Left colon (tissue), 2 donors: ENCODE measurements at regions of chr4 and their contacts with region 1.

Region 1: DNA sequence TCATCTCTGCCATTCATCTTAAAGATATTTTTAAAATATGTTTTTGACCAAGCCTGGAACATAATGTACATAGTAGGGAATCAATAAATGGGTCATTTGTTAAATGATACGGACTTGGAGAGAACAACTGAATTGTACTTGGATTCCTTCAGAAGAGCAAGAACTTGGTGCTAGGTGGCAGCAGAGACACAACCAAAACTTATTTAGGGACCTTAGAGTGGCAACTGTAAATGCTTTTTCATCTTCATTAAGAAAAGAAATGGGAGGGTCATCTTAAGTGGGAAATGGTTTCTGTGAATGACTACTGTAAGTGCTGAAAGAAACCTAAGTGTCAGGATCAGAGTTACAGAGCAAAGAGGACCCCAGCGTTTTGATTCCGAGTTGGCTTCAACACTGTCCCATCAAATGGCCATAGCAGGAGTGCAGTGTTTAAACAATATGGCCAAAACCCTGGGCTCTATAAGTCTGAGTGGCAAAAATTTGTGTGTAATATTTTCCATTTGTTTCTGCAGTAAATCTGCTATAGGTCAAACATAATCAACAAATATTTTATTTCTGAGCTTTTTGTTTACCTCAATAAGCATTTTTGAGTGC is 213.6 kb downstream of the PALLD start:
- DNase-seq: peak in 1 of 2 donors; percentile 28
- ATAC-seq: peak; percentile 51

Region 2: GRCh38 chr4:168309781-168310180 is 400.7 kb before region 1 on chr4:
- intact Hi-C with region 1: no loop called
- DNase-seq: no peak
- ATAC-seq: peak; percentile 69

Region 3: DNA sequence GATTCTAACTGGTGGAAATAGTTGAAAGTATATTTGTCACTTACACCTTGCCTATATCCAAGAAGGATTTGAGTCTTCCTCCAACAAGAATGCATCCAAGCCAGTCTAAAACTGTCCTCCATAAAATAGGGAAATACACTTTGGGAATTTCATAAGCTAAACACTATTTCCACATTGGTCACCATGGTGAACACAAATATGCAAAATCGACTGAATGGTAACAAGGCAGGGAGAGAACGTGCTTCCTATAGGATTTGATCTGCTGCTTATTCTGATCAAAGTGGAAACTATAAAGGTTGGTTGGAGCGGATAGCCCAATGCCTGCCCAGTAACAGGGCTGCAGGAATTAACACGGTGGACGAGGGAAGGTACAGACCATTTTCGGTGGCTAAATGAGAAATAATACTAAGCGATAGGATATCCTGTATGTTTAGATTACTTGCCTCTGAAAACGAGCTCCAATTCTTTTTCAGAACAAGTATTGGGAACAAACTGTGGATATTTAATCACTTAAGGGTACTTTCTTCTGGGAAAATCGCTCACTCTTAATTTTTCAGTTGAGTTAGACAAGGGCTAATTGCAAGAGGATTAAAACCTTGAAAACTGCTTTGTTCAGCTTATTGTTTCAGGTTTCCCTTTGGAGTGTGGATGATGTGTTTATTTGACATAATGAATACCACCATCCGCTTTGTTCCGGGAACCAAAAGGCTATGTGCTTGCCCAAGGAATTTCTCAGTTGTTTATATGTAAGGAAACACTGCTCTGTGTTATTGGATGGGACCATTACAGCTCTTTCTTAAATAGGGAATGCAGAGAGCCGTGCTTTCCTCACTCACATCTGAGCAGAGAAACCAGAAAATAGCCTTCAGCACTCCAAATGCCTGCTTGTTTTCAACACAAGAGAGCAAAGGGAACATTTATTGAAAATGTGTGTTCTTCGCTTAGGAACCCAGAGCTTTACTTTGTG is 105.2 kb after region 1 on chr4:
- intact Hi-C with region 1: loop called in 1 of 2 experiments (anchors 10 kb)
- DNase-seq: no peak
- ATAC-seq: no peak

Region 4: DNA sequence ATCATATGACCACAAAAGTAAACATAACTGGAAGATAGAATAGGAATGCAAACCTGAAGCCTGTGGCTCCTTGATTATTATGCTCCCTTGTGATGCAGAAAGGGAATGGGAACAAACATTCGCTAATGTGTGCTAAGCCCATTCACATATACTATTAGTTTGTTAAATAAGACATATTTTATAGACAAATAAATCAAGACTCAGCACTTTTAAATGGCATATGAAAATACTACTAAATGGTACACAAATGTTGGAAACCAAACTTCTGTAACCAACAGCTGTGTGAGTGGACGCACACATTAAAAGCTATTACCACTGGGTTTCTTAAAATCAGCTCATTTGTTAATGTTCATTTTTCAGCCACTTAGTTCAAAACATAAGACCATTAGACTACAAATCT is 203.6 kb after region 1 on chr4:
- intact Hi-C with region 1: loop called in 1 of 2 experiments (anchors 5 kb)
- DNase-seq: no peak
- ATAC-seq: no peak